ENCODE measurements at regions of chr10 and their contacts with region 1.

Region 1: DNA sequence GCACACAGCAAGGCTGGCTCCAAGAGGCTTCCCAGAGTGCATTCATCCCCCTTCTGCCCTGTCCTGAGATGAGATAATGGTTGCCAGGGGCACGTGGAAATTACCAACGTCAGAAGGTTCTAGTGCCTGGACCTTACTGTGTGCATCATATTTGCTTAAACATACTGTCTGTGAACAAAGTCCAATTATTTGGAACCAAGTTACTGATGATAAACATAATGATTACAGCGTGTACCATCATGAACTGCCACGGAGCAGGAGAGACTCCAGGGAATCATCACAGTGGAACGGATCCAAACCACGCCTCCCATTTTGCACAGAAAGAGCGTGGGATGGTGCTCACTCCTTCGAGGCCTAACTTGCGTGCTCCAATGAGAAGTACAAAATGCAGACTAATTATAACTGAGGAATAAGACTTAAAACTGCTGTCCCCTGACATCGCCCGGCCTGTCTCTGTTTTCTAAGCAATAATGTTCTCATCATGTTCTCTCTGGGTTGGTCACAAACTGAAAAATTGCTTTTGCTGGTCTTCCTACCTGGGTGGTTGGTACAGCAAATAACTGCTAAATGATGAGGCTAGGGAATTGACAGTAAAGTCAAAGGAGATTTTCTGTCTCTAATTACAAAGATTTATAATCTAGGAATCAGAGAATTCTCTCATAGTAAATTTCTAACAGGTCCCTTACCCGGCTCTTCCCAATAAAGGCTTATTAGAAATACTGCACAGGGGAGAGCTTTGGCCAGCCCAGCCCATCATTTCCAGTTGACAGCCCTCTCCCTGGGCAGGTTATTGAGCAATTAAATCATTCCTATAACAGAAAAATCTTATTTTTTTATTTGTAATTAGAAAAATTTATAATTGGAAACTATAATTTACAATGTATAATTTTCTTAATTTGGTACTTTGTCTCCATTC is 182.2 kb downstream of the CAMK1D start:
- DNase-seq: peak; percentile 18
- ATAC-seq: no peak
- H3K4me3 ChIP-seq: no peak overlapping the region
- H3K27ac ChIP-seq: no peak overlapping the region
- H3K4me1 ChIP-seq: peaks cover 3% of the 10 kb centered on the region; the same call in 1 of the 2 replicates
- H3K27me3 ChIP-seq: no peaks in the 10 kb centered on the region
- CTCF ChIP-seq: no peak
- POLR2A ChIP-seq: no peak
- RAD21 ChIP-seq: no peak

Region 2: GRCh38 chr10:12513775-12514673 is 17.5 kb before region 1 on chr10:
- CTCF ChIA-PET with region 1: interaction called, 3 read pairs
- POLR2A ChIA-PET with region 1: no interaction called
- dilution Hi-C with region 1: no loop called
- in situ Hi-C with region 1: no loop called
- intact Hi-C with region 1: loop called (anchors 2 kb)
- DNase-seq: peak; percentile 38
- ATAC-seq: peak; percentile 46
- H3K4me3 ChIP-seq: no peak overlapping the region
- H3K27ac ChIP-seq: no peak overlapping the region
- H3K4me1 ChIP-seq: no peaks in the 10 kb centered on the region
- H3K27me3 ChIP-seq: no peaks in the 10 kb centered on the region
- CTCF ChIP-seq: no peak
- POLR2A ChIP-seq: no peak
- RAD21 ChIP-seq: no peak

Region 3: DNA sequence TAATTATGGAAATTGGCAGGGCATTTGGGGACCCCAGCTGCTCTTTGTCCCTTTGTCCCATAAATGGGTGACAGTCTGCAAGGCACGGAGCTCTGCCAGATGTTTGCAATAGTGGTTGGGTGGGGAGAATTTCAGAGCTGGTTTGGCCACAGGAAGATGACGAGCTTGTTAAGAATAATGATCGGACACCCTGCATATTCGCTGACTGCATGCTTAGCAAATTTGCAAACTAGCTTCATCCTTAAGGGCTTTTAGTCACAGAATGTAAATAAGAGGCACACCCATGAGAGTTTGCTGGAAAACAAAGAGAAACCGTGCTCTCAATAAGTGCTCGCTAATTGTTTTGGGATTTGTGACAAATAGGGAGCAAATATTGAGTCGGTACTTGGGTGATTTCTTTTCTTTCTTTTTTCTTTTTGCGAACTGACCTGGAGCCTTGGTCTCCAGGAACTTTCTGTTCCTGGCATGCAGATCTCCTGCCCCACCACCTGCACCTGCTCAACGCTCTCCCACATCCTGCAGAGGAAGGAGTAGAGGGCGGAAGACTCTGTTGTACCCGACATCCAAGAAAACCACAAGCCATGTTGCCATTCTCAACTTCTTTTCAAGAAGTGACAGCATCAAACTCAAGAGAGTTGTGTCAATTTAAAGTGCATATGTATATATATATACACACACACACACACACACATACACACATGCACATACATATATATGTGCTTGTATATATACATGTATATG is 56.7 kb after region 1 on chr10:
- CTCF ChIA-PET with region 1: no interaction called
- POLR2A ChIA-PET with region 1: no interaction called
- dilution Hi-C with region 1: no loop called
- in situ Hi-C with region 1: no loop called
- intact Hi-C with region 1: no loop called
- DNase-seq: no peak
- ATAC-seq: no peak; the same call in 1 of the 2 replicates
- H3K4me3 ChIP-seq: no peak overlapping the region
- H3K27ac ChIP-seq: no peak overlapping the region
- H3K4me1 ChIP-seq: no peaks in the 10 kb centered on the region; the same call in 1 of the 2 replicates
- H3K27me3 ChIP-seq: 0 out of 2 replicates have a peak, but pooled peaks cover 3% of the 10 kb centered on the region
- CTCF ChIP-seq: no peak
- POLR2A ChIP-seq: no peak
- RAD21 ChIP-seq: no peak

Region 4: GRCh38 chr10:12617191-12618175 is 85.9 kb after region 1 on chr10:
- CTCF ChIA-PET with region 1: no interaction called
- POLR2A ChIA-PET with region 1: no interaction called
- dilution Hi-C with region 1: no loop called
- in situ Hi-C with region 1: no loop called
- intact Hi-C with region 1: no loop called
- DNase-seq: no peak
- ATAC-seq: no peak
- H3K4me3 ChIP-seq: no peak overlapping the region
- H3K27ac ChIP-seq: no peak overlapping the region
- H3K4me1 ChIP-seq: no peaks in the 10 kb centered on the region
- H3K27me3 ChIP-seq: no peaks in the 10 kb centered on the region
- CTCF ChIP-seq: no peak
- POLR2A ChIP-seq: no peak
- RAD21 ChIP-seq: no peak

Measured in IMR-90 (cell line).